Activated T-helper 2 cell treated with anti-CD3 and anti-CD28 coated beads, Interferon-gamma antibody, Interleukin-2, Interleukin-4, amounts not matched to agents 10 μg/mL and 5 μg/mL and 100 μg/mL, durations not matched to agents 14 hours and 24 hours and 36 hours (primary cell): ENCODE measurements at regions of chr1 and their contacts with region 1.

Region 1: DNA sequence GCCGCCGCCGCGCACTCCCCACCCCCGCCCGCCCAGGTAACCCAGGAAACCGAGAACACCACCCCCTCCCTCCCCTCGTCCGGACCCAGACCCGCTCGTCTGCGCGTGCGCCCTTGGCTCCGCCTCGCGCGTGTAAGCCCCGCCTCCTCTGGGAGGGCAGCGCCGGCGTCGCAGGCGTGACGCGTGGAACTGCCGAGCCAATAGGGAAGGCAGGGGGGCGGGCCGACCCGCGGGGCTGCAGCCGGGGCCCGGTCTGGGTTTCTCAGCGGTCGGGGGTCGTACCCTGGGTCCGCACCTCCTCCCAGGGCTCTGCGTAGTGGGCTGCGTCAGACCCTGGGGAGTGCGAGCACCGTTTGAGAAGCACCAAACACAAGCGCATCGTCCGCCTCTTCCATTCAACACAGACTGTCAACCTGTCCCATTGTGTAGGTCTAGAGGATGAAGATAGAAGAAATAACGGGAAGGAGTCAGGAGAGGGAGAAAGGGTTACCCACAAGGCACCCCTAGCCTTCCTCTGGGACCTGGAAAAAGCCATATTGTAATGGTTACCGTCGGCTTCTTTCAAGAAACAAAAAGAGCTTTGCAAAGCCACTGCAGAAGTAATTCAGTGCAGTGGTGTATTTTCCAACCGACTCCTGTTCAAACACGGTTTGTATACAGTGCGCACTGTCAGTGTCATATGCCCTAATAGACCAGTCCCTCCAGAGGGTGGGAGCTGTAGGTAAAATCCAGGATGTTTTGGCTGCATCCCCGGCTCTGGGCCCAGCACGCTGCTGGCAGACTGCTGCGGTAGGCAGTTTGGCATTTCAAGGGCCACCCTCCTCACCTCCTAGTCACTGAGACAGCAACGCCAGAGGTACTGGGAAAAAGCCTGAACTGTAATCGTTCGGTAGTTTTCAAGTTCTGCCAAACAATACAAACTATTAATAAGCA is 473 bp upstream of the LYST start:
- DNase-seq: peak; percentile 97
- H3K4me3 Mint-ChIP-seq: peak overlapping the region; percentile 98
- H3K27ac Mint-ChIP-seq: peak overlapping the region; percentile 99
- H3K4me1 Mint-ChIP-seq: peaks cover 52% of the 10 kb centered on the region
- H3K27me3 Mint-ChIP-seq: no peaks in the 10 kb centered on the region

Region 2: DNA sequence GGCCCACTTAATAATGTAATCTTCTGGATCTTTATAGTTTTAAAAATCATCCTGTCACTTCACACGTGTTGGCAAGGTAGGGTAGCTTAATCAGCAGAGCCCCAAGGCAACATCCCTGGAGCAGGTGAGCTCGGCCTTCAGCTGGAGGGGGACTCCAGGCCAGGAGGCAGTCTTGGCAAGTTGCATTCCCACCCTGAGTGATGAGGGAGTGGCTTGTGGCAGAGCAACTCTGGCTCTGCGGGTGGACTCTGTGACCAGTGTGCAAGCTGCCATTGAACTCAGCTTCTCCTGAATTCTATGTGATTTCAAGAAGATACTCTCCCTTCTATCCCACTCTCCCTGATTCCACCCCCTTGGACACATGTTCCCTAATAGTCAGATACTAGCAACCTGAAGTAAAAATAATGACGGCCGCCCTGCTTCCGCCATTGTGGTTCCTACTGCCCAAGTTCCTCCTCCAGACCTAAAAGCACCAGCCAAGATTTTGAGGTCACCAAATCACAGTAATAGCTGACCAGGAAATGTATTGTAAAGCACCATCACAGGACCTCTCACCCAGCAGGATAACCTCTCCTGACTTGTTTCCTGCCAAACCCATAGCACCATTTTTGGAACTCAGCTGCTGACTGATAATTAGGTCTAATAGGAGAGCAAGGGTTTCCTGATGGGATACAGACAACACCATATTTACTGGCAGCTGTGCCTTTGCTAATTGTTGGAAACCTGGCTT is 11.1 kb after region 1 on chr1:
- intact Hi-C with region 1: loop called (anchors 1 kb)
- DNase-seq: no peak
- H3K4me3 Mint-ChIP-seq: no peak overlapping the region
- H3K27ac Mint-ChIP-seq: peak overlapping the region; percentile 54
- H3K4me1 Mint-ChIP-seq: peaks cover 63% of the 10 kb centered on the region
- H3K27me3 Mint-ChIP-seq: no peaks in the 10 kb centered on the region

Region 3: GRCh38 chr1:236067854-236068454 is 200.8 kb after region 1 on chr1:
- intact Hi-C with region 1: no loop called
- DNase-seq: no peak
- H3K4me3 Mint-ChIP-seq: no peak overlapping the region
- H3K27ac Mint-ChIP-seq: no peak overlapping the region
- H3K4me1 Mint-ChIP-seq: peaks cover 25% of the 10 kb centered on the region
- H3K27me3 Mint-ChIP-seq: peaks cover 40% of the 10 kb centered on the region

Region 4: GRCh38 chr1:236081546-236082227 is 214.5 kb after region 1 on chr1:
- intact Hi-C with region 1: no loop called
- DNase-seq: no peak
- H3K4me3 Mint-ChIP-seq: no peak overlapping the region
- H3K27ac Mint-ChIP-seq: no peak overlapping the region
- H3K4me1 Mint-ChIP-seq: peaks cover 8% of the 10 kb centered on the region
- H3K27me3 Mint-ChIP-seq: peaks cover 3% of the 10 kb centered on the region